ENCODE measurements at regions of chr10 and their contacts with region 1.

Region 1: GRCh38 chr10:60123172-60124067 is 217.1 kb upstream of the CCDC6 start:
- DNase-seq: peak; percentile 85
- H3K4me3 Mint-ChIP-seq: peak overlapping the region; percentile 36
- H3K27ac Mint-ChIP-seq: peak overlapping the region; percentile 83
- H3K4me1 Mint-ChIP-seq: peaks cover 21% of the 10 kb centered on the region
- H3K27me3 Mint-ChIP-seq: no peaks in the 10 kb centered on the region
- CTCF ChIP-seq: no peak

Region 2: DNA sequence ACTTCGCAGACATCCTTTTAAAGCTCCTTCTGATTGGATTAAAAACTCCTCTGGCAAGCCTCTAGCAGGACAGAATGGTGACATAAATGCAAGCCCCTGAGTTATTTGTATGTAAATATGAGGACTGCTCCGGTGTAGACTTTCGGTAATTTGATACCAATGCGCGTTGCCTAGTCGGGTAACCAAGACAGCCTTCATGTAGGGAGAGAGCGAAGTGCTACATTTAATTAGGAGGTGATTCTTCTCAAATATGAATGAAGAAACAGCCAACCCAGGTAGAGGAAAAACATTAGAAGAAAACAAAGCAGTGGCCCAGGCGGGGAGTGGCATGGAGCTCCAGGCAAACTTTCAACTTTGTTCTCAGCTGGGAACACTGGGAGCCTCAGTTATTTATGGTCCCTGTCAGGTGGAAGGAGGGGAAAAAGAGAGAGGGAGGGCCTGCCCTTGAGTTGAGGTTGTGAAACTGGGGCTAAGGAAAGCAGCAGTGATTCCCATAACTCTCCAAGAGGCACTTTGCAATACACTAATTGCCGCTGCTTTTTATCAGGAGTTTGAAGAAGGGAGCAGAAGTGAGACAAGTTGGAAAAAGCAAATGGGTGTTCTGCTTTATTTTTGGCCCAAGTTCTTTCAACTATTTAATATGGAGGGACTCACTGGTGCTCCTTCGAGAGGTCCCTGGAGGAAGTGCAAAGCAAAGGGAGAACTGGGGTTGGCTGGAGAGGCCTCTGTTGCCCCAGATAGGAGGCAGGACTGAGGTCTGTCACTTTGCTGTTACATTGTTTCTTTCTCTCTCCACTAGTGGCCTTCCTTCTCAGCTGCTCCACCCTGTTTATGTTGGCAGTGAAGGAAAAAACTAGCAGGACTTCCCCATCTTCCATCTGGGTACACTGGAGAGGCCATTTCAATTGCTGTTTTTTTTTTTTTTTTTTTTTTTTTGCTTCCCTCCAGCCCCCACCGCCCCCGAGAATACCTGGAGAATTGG is 17.5 kb after region 1 on chr10:
- CTCF ChIA-PET with region 1: interaction called, 5 read pairs
- POLR2A ChIA-PET with region 1: interaction called, 44 read pairs
- intact Hi-C with region 1: loop called (anchors 2 kb)
- DNase-seq: peak; percentile 59
- H3K4me3 Mint-ChIP-seq: no peak overlapping the region
- H3K27ac Mint-ChIP-seq: no peak overlapping the region
- H3K4me1 Mint-ChIP-seq: peaks cover 5% of the 10 kb centered on the region
- H3K27me3 Mint-ChIP-seq: no peaks in the 10 kb centered on the region
- CTCF ChIP-seq: no peak

Measured in MCF 10A (cell line).